ENCODE measurements at regions of chr9 and their contacts with region 1.

Region 1: GRCh38 chr9:1429297-1429696 is 379.1 kb downstream of the DMRT2 start:
- DNase-seq: no peak
- H3K4me3 ChIP-seq: no peak overlapping the region
- H3K27ac ChIP-seq: no peak overlapping the region
- H3K4me1 ChIP-seq: no peaks in the 10 kb centered on the region
- H3K27me3 ChIP-seq: no peaks in the 10 kb centered on the region
- CTCF ChIP-seq: no peak

Region 2: DNA sequence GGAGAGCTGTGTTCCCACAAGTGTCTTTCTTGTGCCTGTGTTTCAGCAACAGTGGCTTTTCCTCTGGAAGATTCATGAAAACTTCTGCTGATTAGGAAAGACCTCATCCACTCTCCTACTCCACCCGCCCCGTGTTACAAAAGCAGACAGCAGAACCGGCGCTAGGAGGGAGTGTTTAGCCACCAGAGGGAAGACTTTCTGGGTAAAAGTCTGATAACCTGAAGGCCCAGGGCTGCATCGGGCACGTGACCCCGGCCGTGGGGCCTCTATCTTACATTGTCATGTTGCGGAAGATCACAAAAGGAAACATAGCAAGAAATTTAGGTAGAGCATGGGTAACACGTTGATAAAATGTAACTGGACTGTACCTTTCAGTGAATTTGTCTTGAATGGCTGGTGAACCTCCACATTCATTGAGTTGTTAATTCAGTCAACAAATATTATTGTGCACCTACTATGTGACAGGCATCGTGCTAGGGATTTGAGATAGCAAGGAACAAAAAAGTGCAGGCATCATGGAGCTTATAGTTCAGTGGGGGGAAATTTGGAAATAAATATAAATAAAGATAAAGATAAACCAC is 411.1 kb before region 1 on chr9:
- CTCF ChIA-PET with region 1: no interaction called
- dilution Hi-C with region 1: no loop called
- in situ Hi-C with region 1: no loop called
- intact Hi-C with region 1: loop called (anchors 5 kb)
- DNase-seq: no peak
- H3K4me3 ChIP-seq: no peak overlapping the region
- H3K27ac ChIP-seq: no peak overlapping the region
- H3K4me1 ChIP-seq: no peaks in the 10 kb centered on the region
- H3K27me3 ChIP-seq: no peaks in the 10 kb centered on the region
- CTCF ChIP-seq: peak in 1 of 2 donors; percentile 48

Region 3: GRCh38 chr9:1536522-1537170 is 107.3 kb after region 1 on chr9:
- CTCF ChIA-PET with region 1: no interaction called
- dilution Hi-C with region 1: no loop called
- in situ Hi-C with region 1: loop called in 1 of 2 experiments (anchors 25 kb)
- intact Hi-C with region 1: no loop called
- DNase-seq: no peak
- H3K4me3 ChIP-seq: no peak overlapping the region
- H3K27ac ChIP-seq: no peak overlapping the region
- H3K4me1 ChIP-seq: no peaks in the 10 kb centered on the region
- H3K27me3 ChIP-seq: no peaks in the 10 kb centered on the region
- CTCF ChIP-seq: no peak

Region 4: GRCh38 chr9:1599961-1600360 is 170.7 kb after region 1 on chr9:
- CTCF ChIA-PET with region 1: no interaction called
- dilution Hi-C with region 1: no loop called
- in situ Hi-C with region 1: no loop called
- intact Hi-C with region 1: no loop called
- DNase-seq: no peak
- H3K4me3 ChIP-seq: no peak overlapping the region
- H3K27ac ChIP-seq: no peak overlapping the region
- H3K4me1 ChIP-seq: no peaks in the 10 kb centered on the region
- H3K27me3 ChIP-seq: no peaks in the 10 kb centered on the region
- CTCF ChIP-seq: no peak